ENCODE measurements at regions of chr19 and their contacts with region 1.

Region 1: DNA sequence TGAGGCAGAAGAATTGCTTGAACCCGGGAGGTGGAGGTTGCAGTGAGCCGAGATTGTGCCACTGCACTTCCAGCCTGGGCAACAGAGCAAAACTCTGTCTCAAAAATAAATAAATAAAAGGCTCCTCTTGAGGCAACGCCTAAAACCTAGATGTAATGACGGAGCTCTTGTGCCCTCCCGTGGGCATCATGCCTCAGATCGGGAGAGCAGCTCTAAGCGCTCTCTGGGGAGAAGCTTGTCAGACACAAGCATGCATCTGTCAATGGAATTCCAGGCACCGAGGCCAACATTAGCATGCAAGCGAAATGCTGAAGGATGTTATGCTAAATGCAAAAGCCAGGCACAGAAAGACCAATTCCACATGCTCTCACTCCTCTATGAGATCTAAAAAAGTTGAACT is 45.6 kb upstream of the MRI1 start:
- DNase-seq: peak; percentile 36
- H3K4me3 ChIP-seq: no peak overlapping the region
- H3K27ac ChIP-seq: no peak overlapping the region
- H3K27me3 ChIP-seq: no peaks in the 10 kb centered on the region
- CTCF ChIP-seq: peak; percentile 49

Region 2: GRCh38 chr19:13597640-13598039 is 121.1 kb before region 1 on chr19:
- CTCF ChIA-PET with region 1: interaction called, 59 read pairs
- POLR2A ChIA-PET with region 1: no interaction called
- DNase-seq: peak; percentile 54
- H3K4me3 ChIP-seq: no peak overlapping the region
- H3K27ac ChIP-seq: no peak overlapping the region
- H3K27me3 ChIP-seq: no peaks in the 10 kb centered on the region
- CTCF ChIP-seq: peak; percentile 79

Region 3: DNA sequence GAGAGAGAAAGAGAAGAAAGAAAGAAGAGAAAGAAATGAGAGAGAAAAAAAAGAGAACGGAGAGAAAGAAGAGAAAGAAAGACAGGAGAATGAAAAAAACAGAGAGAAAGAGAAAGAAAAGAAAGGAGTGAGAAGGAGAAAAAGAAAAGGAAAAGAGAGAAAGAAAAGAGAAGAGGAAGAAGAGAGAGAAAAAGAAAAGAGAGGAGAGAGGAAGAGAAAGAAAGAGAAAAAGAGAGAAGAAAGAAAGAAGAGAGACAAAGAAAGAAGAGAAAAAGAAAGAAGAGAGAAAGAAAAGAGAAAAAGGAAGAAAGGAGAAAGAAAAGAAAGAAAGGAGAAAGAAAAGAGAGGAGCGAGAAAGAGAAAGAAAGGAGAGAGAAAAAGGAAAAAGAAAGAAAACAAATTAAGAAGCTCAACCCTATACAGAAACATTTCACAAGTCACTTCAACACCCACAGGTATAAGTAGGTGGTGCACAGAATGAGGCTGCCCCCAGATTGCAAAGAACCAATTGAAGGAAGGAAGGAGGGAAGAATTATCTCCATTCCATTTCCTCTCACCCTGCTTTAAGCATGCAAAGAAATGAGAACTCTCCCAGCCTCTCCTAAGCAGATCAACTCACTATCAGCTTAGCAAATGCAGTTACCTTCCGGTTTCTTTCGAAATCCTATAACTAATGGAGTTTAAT is 113.7 kb before region 1 on chr19:
- CTCF ChIA-PET with region 1: interaction called, 12 read pairs
- POLR2A ChIA-PET with region 1: no interaction called
- DNase-seq: no peak
- H3K4me3 ChIP-seq: no peak overlapping the region
- H3K27ac ChIP-seq: no peak overlapping the region
- H3K27me3 ChIP-seq: no peaks in the 10 kb centered on the region
- CTCF ChIP-seq: no peak

Region 4: DNA sequence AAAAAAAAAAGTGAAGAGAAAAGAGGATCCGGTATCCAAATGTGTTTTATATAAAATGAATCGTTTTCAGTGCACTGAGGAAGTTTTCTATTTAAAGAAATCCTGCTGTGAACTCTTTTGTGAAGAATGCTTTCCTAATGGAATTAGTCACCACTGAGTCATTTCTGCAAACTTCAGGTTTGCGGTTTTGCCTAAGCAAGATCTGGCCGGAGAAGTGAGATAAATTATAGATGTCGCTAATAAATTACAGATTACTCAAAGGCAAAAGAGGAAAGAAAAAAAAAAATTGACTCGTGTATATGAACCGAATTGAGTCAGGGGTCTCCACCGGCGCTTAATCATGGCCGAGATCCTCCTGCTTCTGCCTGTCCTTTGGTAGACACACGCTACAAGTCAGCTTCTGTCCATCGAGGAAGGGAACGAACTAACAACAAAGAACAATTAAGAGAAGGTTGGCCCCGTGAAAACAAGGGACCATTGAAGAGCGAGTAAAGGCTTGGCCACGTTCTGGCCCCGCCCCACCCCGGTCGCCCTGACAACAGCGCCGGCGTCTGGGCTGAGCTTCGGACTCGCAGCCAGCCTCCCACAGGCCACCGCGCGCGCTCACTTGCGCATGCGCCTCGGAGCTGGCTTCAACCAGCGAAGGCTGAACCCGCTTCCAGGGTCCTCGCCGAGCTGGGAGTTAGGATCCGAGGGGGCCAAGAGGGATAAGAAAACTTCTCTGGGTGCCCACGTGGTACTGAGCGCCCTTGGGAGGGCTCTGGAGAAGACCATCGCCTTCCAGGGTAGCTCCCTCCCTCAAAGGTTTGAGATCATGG is 12.6 kb after region 1 on chr19:
- CTCF ChIA-PET with region 1: interaction called, 27 read pairs
- POLR2A ChIA-PET with region 1: interaction called, 5 read pairs
- DNase-seq: peak; percentile 90
- H3K4me3 ChIP-seq: peak overlapping the region; percentile 83
- H3K27ac ChIP-seq: peak overlapping the region; percentile 99
- H3K27me3 ChIP-seq: peaks cover 2% of the 10 kb centered on the region
- CTCF ChIP-seq: no peak

Measured in AG04450 (cell line).